ENCODE measurements at regions of chr14 and their contacts with region 1.

Region 1: GRCh38 chr14:35140718-35141581 is 18.6 kb downstream of the PRORP start:
- DNase-seq: peak in 2 of 3 donors; percentile 6 to 61
- H3K4me3 ChIP-seq: no peak overlapping the region
- H3K4me3 Mint-ChIP-seq: no peak overlapping the region
- H3K27ac ChIP-seq: no peak overlapping the region
- H3K27ac Mint-ChIP-seq: peak overlapping the region in 2 of 7 donors; percentile 31 to 42
- H3K4me1 ChIP-seq: peaks cover 5 to 14% of the 10 kb centered on the region in 2 donors
- H3K4me1 Mint-ChIP-seq: peaks cover 16% of the 10 kb centered on the region
- H3K27me3 ChIP-seq: no peaks in the 10 kb centered on the region
- H3K27me3 Mint-ChIP-seq: no peaks in the 10 kb centered on the region
- CTCF ChIP-seq: peak; percentile 69

Region 2: GRCh38 chr14:35416108-35416750 is 275.3 kb after region 1 on chr14:
- intact Hi-C with region 1: loop called (anchors 2 to 5 kb)
- DNase-seq: no peak
- H3K4me3 ChIP-seq: no peak overlapping the region
- H3K4me3 Mint-ChIP-seq: no peak overlapping the region
- H3K27ac ChIP-seq: no peak overlapping the region
- H3K27ac Mint-ChIP-seq: no peak overlapping the region
- H3K4me1 ChIP-seq: no peaks in the 10 kb centered on the region
- H3K4me1 Mint-ChIP-seq: peaks cover 10% of the 10 kb centered on the region
- H3K27me3 ChIP-seq: no peaks in the 10 kb centered on the region
- H3K27me3 Mint-ChIP-seq: peaks cover 0 to 5% (median 4%) of the 10 kb centered on the region in 3 donors
- CTCF ChIP-seq: no peak

Region 3: DNA sequence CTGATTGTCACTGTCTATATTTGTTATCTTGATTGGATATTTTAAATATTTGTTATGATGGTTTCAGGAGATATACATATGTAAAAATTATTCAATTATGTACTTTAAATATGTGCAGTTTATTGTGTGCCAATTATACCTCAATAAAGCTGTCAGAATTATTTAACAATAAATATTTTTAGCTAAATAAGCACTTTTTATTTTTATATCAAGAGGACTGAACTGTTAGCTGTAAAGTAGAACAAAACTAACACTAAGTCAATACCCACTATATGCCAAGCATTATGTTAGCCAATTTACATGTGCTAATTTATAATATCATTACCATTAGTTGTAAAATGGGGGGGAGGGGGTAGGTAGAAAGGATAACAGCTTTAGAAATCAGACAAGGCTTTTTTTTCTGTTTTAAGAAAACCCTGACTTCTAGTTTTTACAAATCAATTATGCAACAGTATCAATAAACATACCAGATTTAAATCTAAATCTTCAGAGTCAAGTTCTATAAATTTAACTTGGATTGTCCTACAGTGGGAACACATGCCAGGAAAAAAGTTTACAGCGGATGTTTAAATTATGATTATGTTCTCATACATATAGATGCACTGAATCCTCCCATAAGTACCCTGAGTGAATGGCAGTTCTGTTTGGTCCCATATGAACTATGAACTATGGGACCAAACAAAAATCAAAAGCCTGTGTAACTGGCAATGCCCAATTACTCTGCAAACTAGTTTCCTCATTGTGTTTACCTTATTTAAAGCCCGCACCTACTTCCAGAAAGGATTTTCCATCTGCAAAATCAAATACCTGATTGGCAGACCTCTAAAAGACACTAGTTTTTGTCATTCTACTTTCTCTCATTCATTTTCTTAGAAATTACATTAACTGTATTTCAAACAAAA is 665.3 kb after region 1 on chr14:
- intact Hi-C with region 1: no loop called
- DNase-seq: no peak
- H3K4me3 ChIP-seq: no peak overlapping the region
- H3K4me3 Mint-ChIP-seq: no peak overlapping the region
- H3K27ac ChIP-seq: no peak overlapping the region
- H3K27ac Mint-ChIP-seq: no peak overlapping the region
- H3K4me1 ChIP-seq: peaks cover 9 to 16% of the 10 kb centered on the region in 2 donors
- H3K4me1 Mint-ChIP-seq: peaks cover 22% of the 10 kb centered on the region
- H3K27me3 ChIP-seq: no peaks in the 10 kb centered on the region
- H3K27me3 Mint-ChIP-seq: peaks cover 0 to 5% (median 4%) of the 10 kb centered on the region in 3 donors
- CTCF ChIP-seq: no peak

Measured in CD14-positive monocyte (primary cell).